ENCODE measurements at regions of chr3 and their contacts with region 1.

Region 1: DNA sequence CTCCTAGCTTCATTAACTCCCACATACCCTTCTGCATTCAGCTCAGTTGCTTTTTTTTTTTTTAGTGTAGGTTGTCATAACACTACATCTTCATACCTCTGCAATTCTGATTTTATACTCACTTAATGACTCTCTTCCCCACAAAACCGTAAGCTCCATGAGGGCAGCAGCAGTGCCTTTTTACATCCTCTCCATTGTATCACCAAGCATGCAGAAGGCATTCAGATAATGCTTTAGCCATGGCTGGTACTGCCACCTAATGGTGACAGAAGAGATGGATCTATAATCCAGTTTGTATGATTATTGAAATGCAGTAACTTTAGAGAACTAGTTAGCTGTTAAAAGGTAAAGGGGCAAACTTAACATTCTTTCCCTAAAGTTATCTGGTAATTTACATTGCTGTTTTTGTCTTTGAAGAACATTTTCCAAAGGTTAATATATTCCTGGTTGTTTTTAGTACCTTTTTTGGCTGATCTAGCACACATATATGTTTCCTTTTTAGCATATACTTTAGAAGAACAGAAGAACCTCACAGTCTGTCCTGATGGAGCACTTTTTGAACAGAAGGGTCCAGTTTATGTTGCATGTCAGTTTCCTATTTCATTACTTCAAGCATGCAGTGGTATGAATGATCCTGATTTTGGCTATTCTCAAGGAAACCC is 36.8 kb downstream of the ATP1B3 start:
- DNase-seq: peak in 2 of 5 donors; percentile 25 to 32
- ATAC-seq: peak in 3 of 4 donors; percentile 64 to 77 (median 67)
- H3K4me3 ChIP-seq: no peak overlapping the region
- H3K27ac ChIP-seq: no peak overlapping the region
- H3K4me1 ChIP-seq: no peaks in the 10 kb centered on the region
- H3K27me3 ChIP-seq: no peaks in the 10 kb centered on the region
- CTCF ChIP-seq: peak; percentile 56 to 75 (median 67)
- POLR2A ChIP-seq: no peak

Region 2: GRCh38 chr3:141379250-141379966 is 533.9 kb before region 1 on chr3:
- intact Hi-C with region 1: no loop called
- DNase-seq: no peak
- ATAC-seq: peak in 1 of 4 donors; percentile 15
- H3K4me3 ChIP-seq: no peak overlapping the region
- H3K27ac ChIP-seq: peak overlapping the region in 2 of 12 donors; percentile 0 to 63
- H3K4me1 ChIP-seq: peaks cover 0 to 21% (median 0%) of the 10 kb centered on the region in 12 donors
- H3K27me3 ChIP-seq: no peaks in the 10 kb centered on the region
- CTCF ChIP-seq: no peak
- POLR2A ChIP-seq: no peak

Region 3: DNA sequence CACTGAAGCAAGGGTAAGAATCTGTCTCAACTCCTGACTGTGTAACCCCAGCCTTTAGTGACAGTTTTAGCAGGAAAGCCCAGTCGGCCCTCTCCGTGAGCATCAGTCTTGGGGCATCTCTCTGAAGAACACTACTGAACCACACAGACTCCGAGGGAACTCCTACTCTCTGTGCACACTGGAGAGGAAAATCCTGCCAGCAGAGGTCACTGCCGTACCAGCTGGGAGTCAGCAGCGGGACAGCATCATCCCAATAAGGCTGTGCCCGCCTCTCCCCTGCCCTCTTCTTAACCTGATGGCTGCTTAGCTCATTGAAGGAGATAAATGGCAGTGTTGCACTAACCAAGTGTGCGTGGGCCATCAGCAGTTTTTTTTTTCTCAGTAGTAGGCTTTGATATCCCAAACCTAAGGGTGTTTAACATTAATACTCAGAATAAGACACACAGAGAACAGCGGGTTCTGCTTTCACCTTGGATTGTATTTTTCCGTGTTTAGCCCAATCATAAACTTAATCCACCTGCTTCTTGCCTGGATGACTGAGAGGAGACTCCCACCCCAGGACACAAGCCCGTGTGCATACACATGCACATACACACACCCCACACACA is 453.1 kb before region 1 on chr3:
- intact Hi-C with region 1: loop called in 2 of 10 experiments (anchors 10 kb)
- DNase-seq: peak; percentile 85 to 91 (median 89)
- ATAC-seq: peak; percentile 89 to 98 (median 97)
- H3K4me3 ChIP-seq: no peak overlapping the region
- H3K27ac ChIP-seq: no peak overlapping the region
- H3K4me1 ChIP-seq: peaks cover 0 to 12% (median under 1%) of the 10 kb centered on the region in 12 donors
- H3K27me3 ChIP-seq: no peaks in the 10 kb centered on the region
- CTCF ChIP-seq: peak; percentile 77 to 92 (median 87)
- POLR2A ChIP-seq: no peak

Region 4: DNA sequence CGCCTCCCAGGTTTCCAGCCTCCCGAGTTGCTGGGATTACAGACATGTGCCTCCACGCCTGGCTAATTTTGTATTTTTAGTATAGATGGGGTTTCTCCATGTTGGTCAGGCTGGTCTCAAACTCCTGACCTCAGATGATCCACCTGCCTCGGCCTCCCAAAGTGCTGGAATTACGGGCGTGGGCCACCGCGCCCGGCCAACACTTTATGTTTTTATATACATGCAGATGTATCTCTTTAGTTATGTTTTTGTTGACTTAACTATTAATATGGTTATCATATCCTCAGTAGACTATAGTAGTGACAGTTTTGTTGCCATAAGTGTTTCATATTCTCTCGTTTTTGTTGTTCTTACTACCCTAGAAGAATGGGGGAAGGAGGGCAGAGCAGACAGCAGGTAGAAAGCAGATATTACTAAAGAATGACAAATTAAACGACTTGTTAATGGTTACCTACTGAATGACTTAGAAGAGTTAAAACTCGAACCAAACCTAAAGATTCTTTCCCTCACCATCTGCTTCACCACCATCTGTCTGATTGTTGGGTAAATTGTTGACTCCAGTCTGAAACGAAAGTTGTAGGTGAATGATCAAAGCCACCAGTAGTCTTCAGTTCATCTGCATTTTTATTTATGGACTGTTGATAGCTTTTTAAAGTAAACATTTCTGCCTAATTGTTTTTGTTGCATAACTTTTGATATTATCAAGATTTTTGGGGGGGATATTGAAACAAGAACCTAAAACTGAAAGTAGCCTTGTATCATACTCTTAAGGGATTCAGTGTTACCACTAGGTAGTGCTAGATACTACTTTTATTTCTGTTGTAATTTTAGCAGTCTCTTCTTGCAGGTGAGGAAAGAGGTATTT is 337.2 kb before region 1 on chr3:
- intact Hi-C with region 1: loop called in 9 of 10 experiments (anchors 2 to 10 kb)
- DNase-seq: no peak
- ATAC-seq: peak in 2 of 4 donors; percentile 65 to 71
- H3K4me3 ChIP-seq: no peak overlapping the region
- H3K27ac ChIP-seq: peak overlapping the region in 1 of 12 donors; percentile 63
- H3K4me1 ChIP-seq: peaks cover 0 to 9% (median 0%) of the 10 kb centered on the region in 12 donors
- H3K27me3 ChIP-seq: no peaks in the 10 kb centered on the region
- CTCF ChIP-seq: peak; percentile 31 to 71 (median 56)
- POLR2A ChIP-seq: no peak

Region 5: GRCh38 chr3:141659821-141660613 is 253.3 kb before region 1 on chr3:
- intact Hi-C with region 1: loop called in 1 of 10 experiments (anchors 10 kb)
- DNase-seq: peak; percentile 57 to 85 (median 64)
- ATAC-seq: peak; percentile 72 to 95 (median 92)
- H3K4me3 ChIP-seq: peak overlapping the region; percentile 4 to 73 (median 58)
- H3K27ac ChIP-seq: peak overlapping the region in 5 of 12 donors; percentile 0 to 85 (median 33)
- H3K4me1 ChIP-seq: peaks cover 0 to 21% (median 9%) of the 10 kb centered on the region in 12 donors
- H3K27me3 ChIP-seq: peaks cover 0 to 18% (median 0%) of the 10 kb centered on the region in 9 donors
- CTCF ChIP-seq: no peak
- POLR2A ChIP-seq: no peak

Region 6: GRCh38 chr3:141782454-141782853 is 130.8 kb before region 1 on chr3:
- intact Hi-C with region 1: loop called in 1 of 10 experiments (anchors 10 kb)
- DNase-seq: no peak
- ATAC-seq: no peak
- H3K4me3 ChIP-seq: no peak overlapping the region
- H3K27ac ChIP-seq: no peak overlapping the region
- H3K4me1 ChIP-seq: no peaks in the 10 kb centered on the region
- H3K27me3 ChIP-seq: no peaks in the 10 kb centered on the region
- CTCF ChIP-seq: peak in 5 of 12 donors; percentile 18 to 45 (median 30)
- POLR2A ChIP-seq: no peak

Region 7: GRCh38 chr3:141875374-141875892 is 37.8 kb before region 1 on chr3:
- intact Hi-C with region 1: loop called in 1 of 10 experiments (anchors 2 kb)
- DNase-seq: peak; percentile 87 to 90 (median 87)
- ATAC-seq: peak; percentile 88 to 96 (median 90)
- H3K4me3 ChIP-seq: peak overlapping the region; percentile 52 to 99 (median 90)
- H3K27ac ChIP-seq: peak overlapping the region; percentile 94 to 100 (median 99)
- H3K4me1 ChIP-seq: peaks cover 6 to 38% (median 19%) of the 10 kb centered on the region in 12 donors
- H3K27me3 ChIP-seq: no peaks in the 10 kb centered on the region
- CTCF ChIP-seq: peak; percentile 77 to 96 (median 88)
- POLR2A ChIP-seq: no peak

Region 8: GRCh38 chr3:142337994-142338393 is 424.7 kb after region 1 on chr3:
- intact Hi-C with region 1: no loop called
- DNase-seq: no peak
- ATAC-seq: peak; percentile 20 to 84 (median 62)
- H3K4me3 ChIP-seq: no peak overlapping the region
- H3K27ac ChIP-seq: peak overlapping the region in 1 of 12 donors; percentile 65
- H3K4me1 ChIP-seq: peaks cover 0 to 14% (median 0%) of the 10 kb centered on the region in 12 donors
- H3K27me3 ChIP-seq: no peaks in the 10 kb centered on the region
- CTCF ChIP-seq: no peak
- POLR2A ChIP-seq: no peak

Measured in heart left ventricle (tissue), 16 donors.